ENCODE measurements at regions of chr5 and their contacts with region 1.

Region 1: GRCh38 chr5:11261226-11261625 is 500.2 kb upstream of the DAP start:
- DNase-seq: no peak
- ATAC-seq: no peak
- H3K4me3 ChIP-seq: no peak overlapping the region
- H3K27ac ChIP-seq: no peak overlapping the region
- H3K4me1 ChIP-seq: peaks cover 0 to 3% (median 0%) of the 10 kb centered on the region in 3 donors
- H3K27me3 ChIP-seq: no peaks in the 10 kb centered on the region
- CTCF ChIP-seq: no peak

Region 2: DNA sequence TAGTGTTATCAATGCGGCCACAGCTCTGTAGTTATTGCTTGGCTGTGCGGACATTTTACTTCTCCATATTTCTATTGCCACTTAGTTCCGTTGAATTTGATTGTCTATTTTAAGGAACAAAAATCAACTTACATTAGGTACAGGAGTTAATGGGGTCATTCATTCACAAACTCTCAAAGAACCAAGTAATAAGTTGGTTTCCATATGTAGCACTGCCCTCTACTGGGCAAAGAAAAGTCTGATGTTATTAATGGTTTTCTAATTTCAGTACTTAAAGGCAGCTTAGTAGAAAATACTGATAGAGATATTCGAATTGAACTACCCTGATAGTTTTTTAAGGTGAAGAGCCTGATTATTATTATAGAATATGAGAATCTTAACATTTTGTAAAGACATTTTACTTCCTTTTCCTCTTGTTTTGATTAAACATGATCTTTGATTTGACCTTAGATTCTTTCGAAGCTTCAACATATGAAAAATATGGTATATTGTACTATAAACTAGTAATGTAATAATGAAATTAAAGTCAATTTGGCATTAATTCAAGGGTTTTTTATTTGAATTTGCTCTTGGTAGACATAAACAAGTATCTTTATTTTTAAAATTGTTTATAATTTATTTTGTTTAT is 762.5 kb after region 1 on chr5:
- intact Hi-C with region 1: loop called in 1 of 3 experiments (anchors 10 kb)
- DNase-seq: peak in 1 of 6 donors; percentile 14
- ATAC-seq: peak; percentile 71 to 87 (median 81)
- H3K4me3 ChIP-seq: no peak overlapping the region
- H3K27ac ChIP-seq: no peak overlapping the region
- H3K4me1 ChIP-seq: peaks cover 6 to 7% (median 7%) of the 10 kb centered on the region in 3 donors
- H3K27me3 ChIP-seq: no peaks in the 10 kb centered on the region
- CTCF ChIP-seq: peak; percentile 42 to 64 (median 50)

Measured in pancreas (tissue), 10 donors.